ENCODE measurements at regions of chr5 and their contacts with region 1.

Region 1: GRCh38 chr5:41542183-41542582 is 31.8 kb upstream of the PLCXD3 start:
- DNase-seq: no peak
- H3K4me3 ChIP-seq: no peak overlapping the region
- CTCF ChIP-seq: no peak

Region 2: GRCh38 chr5:41435276-41435675 is 106.9 kb before region 1 on chr5:
- in situ Hi-C with region 1: loop called (anchors 5 kb)
- DNase-seq: no peak
- H3K4me3 ChIP-seq: no peak overlapping the region
- CTCF ChIP-seq: no peak

Region 3: DNA sequence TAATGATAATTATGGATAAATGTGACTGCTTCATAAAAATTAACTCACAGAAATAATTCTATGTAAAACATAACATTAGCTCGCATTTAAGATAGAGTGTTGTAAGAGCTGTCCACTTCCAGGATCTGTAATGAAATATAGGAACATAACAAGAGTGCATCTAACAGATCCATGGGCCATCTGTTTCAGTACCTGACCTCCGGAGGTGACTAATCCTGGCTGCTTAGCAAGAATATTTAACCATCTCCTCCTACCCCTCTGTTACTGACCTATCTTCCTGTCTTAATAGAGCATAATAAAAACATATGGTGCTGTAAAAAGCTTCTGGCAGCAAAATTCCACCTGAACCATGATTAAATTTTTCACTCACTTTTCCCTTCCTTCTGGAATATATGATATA is 38.9 kb before region 1 on chr5:
- in situ Hi-C with region 1: no loop called
- DNase-seq: no peak
- H3K4me3 ChIP-seq: no peak overlapping the region
- CTCF ChIP-seq: no peak